ENCODE measurements at regions of chr1 and their contacts with region 1.

Region 1: GRCh38 chr1:8962812-8963530 is 17.3 kb downstream of the CA6 start:
- DNase-seq: peak; percentile 76 to 85
- H3K4me3 ChIP-seq: no peak overlapping the region
- H3K4me3 Mint-ChIP-seq: no peak overlapping the region
- H3K27ac Mint-ChIP-seq: no peak overlapping the region
- H3K4me1 ChIP-seq: 0 out of 2 replicates have a peak, but pooled peaks cover 8% of the 10 kb centered on the region
- H3K4me1 Mint-ChIP-seq: peaks cover 17% of the 10 kb centered on the region
- H3K27me3 ChIP-seq: no peaks in the 10 kb centered on the region
- H3K27me3 Mint-ChIP-seq: no peaks in the 10 kb centered on the region
- CTCF ChIP-seq: peak; percentile 11 to 66

Region 2: DNA sequence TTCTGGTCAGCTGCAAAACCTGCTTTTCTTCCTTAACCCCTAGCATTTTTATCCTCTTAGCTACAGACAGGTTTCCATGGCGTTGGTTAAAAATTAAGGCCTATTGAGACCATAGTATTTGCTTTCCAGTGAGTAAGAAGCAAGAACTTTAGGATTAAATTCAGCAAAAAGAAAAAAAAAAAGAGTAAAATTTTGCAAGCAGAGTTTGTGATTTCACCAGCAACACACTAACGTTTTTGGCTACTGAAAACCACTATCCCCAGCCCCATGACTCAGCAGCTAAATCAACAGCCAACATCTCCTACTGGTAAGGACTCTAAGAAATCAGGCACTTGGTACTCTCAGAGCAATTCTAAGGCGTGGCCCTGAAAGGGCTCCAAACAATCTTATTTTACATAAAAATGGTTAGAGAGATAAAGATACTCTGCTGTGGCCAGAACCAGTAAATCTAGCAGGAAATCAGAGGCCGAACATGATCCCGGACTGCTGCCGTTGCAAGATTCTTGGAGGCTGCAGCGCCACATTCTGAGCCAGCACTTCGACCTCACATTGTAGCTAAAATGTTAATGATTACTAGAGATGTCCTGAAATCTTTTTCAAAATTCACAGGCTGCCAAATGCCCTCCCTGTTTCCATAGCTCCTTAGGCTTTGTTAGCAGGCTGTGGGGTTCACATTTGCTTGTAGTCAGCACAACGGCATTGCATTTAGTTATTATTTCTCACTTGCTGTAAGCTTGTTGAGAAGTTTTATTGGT is 82.9 kb before region 1 on chr1:
- CTCF ChIA-PET with region 1: no interaction called
- POLR2A ChIA-PET with region 1: interaction called, 3 read pairs
- intact Hi-C with region 1: loop called (anchors 2 kb)
- DNase-seq: peak; percentile 58 to 67
- H3K4me3 ChIP-seq: peak overlapping the region; percentile 98
- H3K4me3 Mint-ChIP-seq: peak overlapping the region; percentile 92
- H3K27ac Mint-ChIP-seq: peak overlapping the region; percentile 97
- H3K4me1 ChIP-seq: peaks cover 14% of the 10 kb centered on the region
- H3K4me1 Mint-ChIP-seq: peaks cover 22% of the 10 kb centered on the region
- H3K27me3 ChIP-seq: no peaks in the 10 kb centered on the region
- H3K27me3 Mint-ChIP-seq: no peaks in the 10 kb centered on the region
- CTCF ChIP-seq: no peak

Region 3: GRCh38 chr1:8987881-8988617 is 25.1 kb after region 1 on chr1:
- CTCF ChIA-PET with region 1: interaction called, 8 read pairs
- POLR2A ChIA-PET with region 1: no interaction called
- intact Hi-C with region 1: loop called (anchors 2 kb)
- DNase-seq: peak in 1 of 2 experiments; percentile 70
- H3K4me3 ChIP-seq: no peak overlapping the region
- H3K4me3 Mint-ChIP-seq: no peak overlapping the region
- H3K27ac Mint-ChIP-seq: no peak overlapping the region
- H3K4me1 ChIP-seq: no peaks in the 10 kb centered on the region
- H3K4me1 Mint-ChIP-seq: peaks cover 10% of the 10 kb centered on the region
- H3K27me3 ChIP-seq: no peaks in the 10 kb centered on the region
- H3K27me3 Mint-ChIP-seq: no peaks in the 10 kb centered on the region
- CTCF ChIP-seq: peak; percentile 79 to 81

Region 4: GRCh38 chr1:9004700-9005394 is 41.9 kb after region 1 on chr1:
- CTCF ChIA-PET with region 1: interaction called, 64 read pairs
- POLR2A ChIA-PET with region 1: no interaction called
- intact Hi-C with region 1: loop called (anchors 5 kb)
- DNase-seq: peak; percentile 69 to 80
- H3K4me3 ChIP-seq: no peak overlapping the region
- H3K4me3 Mint-ChIP-seq: no peak overlapping the region
- H3K27ac Mint-ChIP-seq: no peak overlapping the region
- H3K4me1 ChIP-seq: peaks cover 46% of the 10 kb centered on the region
- H3K4me1 Mint-ChIP-seq: peaks cover 19% of the 10 kb centered on the region
- H3K27me3 ChIP-seq: no peaks in the 10 kb centered on the region
- H3K27me3 Mint-ChIP-seq: no peaks in the 10 kb centered on the region
- CTCF ChIP-seq: peak; percentile 79 to 83

Region 5: GRCh38 chr1:9101510-9102146 is 138.7 kb after region 1 on chr1:
- CTCF ChIA-PET with region 1: interaction called, 17 read pairs
- POLR2A ChIA-PET with region 1: no interaction called
- intact Hi-C with region 1: no loop called
- DNase-seq: peak; percentile 63 to 65
- H3K4me3 ChIP-seq: no peak overlapping the region
- H3K4me3 Mint-ChIP-seq: no peak overlapping the region
- H3K27ac Mint-ChIP-seq: no peak overlapping the region
- H3K4me1 ChIP-seq: no peaks in the 10 kb centered on the region
- H3K4me1 Mint-ChIP-seq: no peaks in the 10 kb centered on the region
- H3K27me3 ChIP-seq: no peaks in the 10 kb centered on the region
- H3K27me3 Mint-ChIP-seq: no peaks in the 10 kb centered on the region
- CTCF ChIP-seq: peak; percentile 44 to 78

Region 6: DNA sequence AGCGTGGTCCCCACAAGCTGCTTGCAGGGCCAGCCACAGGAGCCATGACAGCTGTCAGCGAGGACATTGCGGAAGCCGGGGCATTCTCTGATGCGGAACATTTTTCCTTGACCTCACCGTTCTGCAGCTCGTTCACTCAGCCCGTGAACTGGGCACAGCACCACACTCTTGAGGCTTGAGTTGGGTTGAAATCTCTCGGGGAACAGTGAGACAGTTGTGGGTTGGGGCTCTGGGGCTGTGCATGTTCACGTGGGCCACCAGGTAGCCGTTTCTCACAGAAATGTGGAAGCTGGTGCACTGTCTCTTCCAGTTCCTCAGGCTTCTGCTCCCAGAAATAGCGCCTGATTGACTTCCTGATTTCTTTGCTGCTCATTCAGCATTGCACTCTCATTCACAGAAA is 399.5 kb after region 1 on chr1:
- CTCF ChIA-PET with region 1: no interaction called
- POLR2A ChIA-PET with region 1: no interaction called
- intact Hi-C with region 1: no loop called
- DNase-seq: no peak
- H3K4me3 ChIP-seq: no peak overlapping the region
- H3K4me3 Mint-ChIP-seq: no peak overlapping the region
- H3K27ac Mint-ChIP-seq: no peak overlapping the region
- H3K4me1 ChIP-seq: no peaks in the 10 kb centered on the region
- H3K4me1 Mint-ChIP-seq: no peaks in the 10 kb centered on the region
- H3K27me3 ChIP-seq: no peaks in the 10 kb centered on the region
- H3K27me3 Mint-ChIP-seq: no peaks in the 10 kb centered on the region
- CTCF ChIP-seq: no peak

Measured in Caco-2 (cell line).